Naive thymus-derived CD4-positive, alpha-beta T cell (primary cell): ENCODE measurements at regions of chr10 and their contacts with region 1.

Region 1: GRCh38 chr10:35351021-35351420 is 14.7 kb downstream of the CCNY start:
- DNase-seq: no peak
- ATAC-seq: no peak
- H3K4me3 ChIP-seq: no peak overlapping the region
- H3K4me3 Mint-ChIP-seq: peak overlapping the region in 6 of 10 donors; percentile 23 to 56 (median 38)
- H3K27ac ChIP-seq: no peak overlapping the region
- H3K27ac Mint-ChIP-seq: peak overlapping the region in 2 of 9 donors; percentile 5 to 52
- H3K4me1 ChIP-seq: peaks cover 18 to 24% of the 10 kb centered on the region in 2 donors
- H3K4me1 Mint-ChIP-seq: peaks cover 70 to 100% (median 94%) of the 10 kb centered on the region in 7 donors
- H3K27me3 ChIP-seq: no peaks in the 10 kb centered on the region
- H3K27me3 Mint-ChIP-seq: no peaks in the 10 kb centered on the region

Region 2: DNA sequence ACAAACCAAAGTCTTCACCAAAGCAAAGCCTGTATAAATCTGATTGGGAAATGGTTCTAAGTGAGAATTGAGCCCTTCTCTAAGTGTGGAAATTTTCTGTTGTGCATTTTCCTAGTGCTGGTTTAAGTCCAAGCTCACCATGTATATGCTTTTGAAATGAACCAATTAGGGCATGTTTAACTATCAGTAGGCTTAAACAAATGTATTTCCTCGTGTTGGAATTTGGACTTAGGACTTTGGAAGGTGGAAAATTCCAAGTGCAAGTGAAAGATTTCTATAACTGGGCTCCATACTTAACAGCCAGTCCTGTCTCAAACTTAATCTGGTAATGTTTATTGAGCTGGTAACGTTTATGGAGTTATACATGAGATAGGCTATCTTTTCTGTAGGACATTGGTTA is 13.8 kb after region 1 on chr10:
- CTCF ChIA-PET with region 1: interaction called, 4 read pairs
- POLR2A ChIA-PET with region 1: interaction called, 3 read pairs
- intact Hi-C with region 1: loop called in 1 of 2 experiments (anchors 2 kb)
- DNase-seq: no peak
- ATAC-seq: no peak
- H3K4me3 ChIP-seq: no peak overlapping the region
- H3K4me3 Mint-ChIP-seq: peak overlapping the region in 1 of 10 donors; percentile 15
- H3K27ac ChIP-seq: no peak overlapping the region
- H3K27ac Mint-ChIP-seq: peak overlapping the region in 1 of 9 donors; percentile 11
- H3K4me1 ChIP-seq: peaks cover 0 to 30% of the 10 kb centered on the region in 2 donors
- H3K4me1 Mint-ChIP-seq: peaks cover 23 to 81% (median 71%) of the 10 kb centered on the region in 7 donors
- H3K27me3 ChIP-seq: no peaks in the 10 kb centered on the region
- H3K27me3 Mint-ChIP-seq: no peaks in the 10 kb centered on the region

Region 3: GRCh38 chr10:35379226-35380137 is 28.5 kb after region 1 on chr10:
- CTCF ChIA-PET with region 1: no interaction called
- POLR2A ChIA-PET with region 1: no interaction called
- intact Hi-C with region 1: no loop called
- DNase-seq: peak in 7 of 9 donors; percentile 16 to 56 (median 34)
- ATAC-seq: peak; percentile 73
- H3K4me3 ChIP-seq: no peak overlapping the region
- H3K4me3 Mint-ChIP-seq: peak overlapping the region; percentile 18 to 74 (median 58)
- H3K27ac ChIP-seq: peak overlapping the region; percentile 12
- H3K27ac Mint-ChIP-seq: peak overlapping the region; percentile 41 to 90 (median 75)
- H3K4me1 ChIP-seq: peaks cover 9 to 26% of the 10 kb centered on the region in 2 donors
- H3K4me1 Mint-ChIP-seq: peaks cover 40 to 92% (median 77%) of the 10 kb centered on the region in 7 donors
- H3K27me3 ChIP-seq: no peaks in the 10 kb centered on the region
- H3K27me3 Mint-ChIP-seq: no peaks in the 10 kb centered on the region

Region 4: DNA sequence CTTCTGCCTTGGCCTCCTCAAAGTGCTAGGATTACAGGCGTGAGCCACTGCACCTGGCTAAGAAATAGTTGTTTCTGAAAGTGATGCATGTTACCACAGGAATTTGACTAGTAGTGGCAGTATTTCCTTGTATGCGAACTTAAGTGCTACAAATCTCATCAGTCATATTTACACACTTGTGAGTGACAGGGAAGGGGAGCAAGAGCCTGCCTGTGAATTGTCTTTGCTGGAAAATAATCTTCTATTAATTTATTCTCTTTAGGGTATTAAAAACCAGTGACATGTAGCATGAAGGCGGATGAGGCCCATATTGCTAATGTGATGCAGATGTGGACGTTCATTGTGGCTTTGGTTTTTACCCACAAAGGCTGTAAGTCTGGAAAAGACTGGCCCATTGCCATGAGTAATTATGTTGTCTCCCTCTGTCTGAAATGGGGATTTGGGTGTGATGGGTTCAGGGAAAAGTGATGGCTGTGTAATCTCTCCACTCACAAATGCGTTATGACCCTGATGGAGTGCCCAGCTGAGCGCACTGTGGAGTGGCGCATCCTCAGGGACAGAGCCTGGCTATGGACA is 82.9 kb after region 1 on chr10:
- CTCF ChIA-PET with region 1: no interaction called
- POLR2A ChIA-PET with region 1: no interaction called
- intact Hi-C with region 1: no loop called
- DNase-seq: no peak
- ATAC-seq: no peak
- H3K4me3 ChIP-seq: no peak overlapping the region
- H3K4me3 Mint-ChIP-seq: peak overlapping the region in 1 of 10 donors; percentile 10
- H3K27ac ChIP-seq: no peak overlapping the region
- H3K27ac Mint-ChIP-seq: peak overlapping the region in 5 of 9 donors; percentile 14 to 82 (median 58)
- H3K4me1 ChIP-seq: no peaks in the 10 kb centered on the region
- H3K4me1 Mint-ChIP-seq: peaks cover 18 to 51% (median 35%) of the 10 kb centered on the region in 7 donors
- H3K27me3 ChIP-seq: no peaks in the 10 kb centered on the region
- H3K27me3 Mint-ChIP-seq: no peaks in the 10 kb centered on the region

Region 5: GRCh38 chr10:35516102-35516670 is 165.2 kb after region 1 on chr10:
- CTCF ChIA-PET with region 1: no interaction called
- POLR2A ChIA-PET with region 1: no interaction called
- intact Hi-C with region 1: no loop called
- DNase-seq: no peak
- ATAC-seq: no peak
- H3K4me3 ChIP-seq: no peak overlapping the region
- H3K4me3 Mint-ChIP-seq: peak overlapping the region in 3 of 10 donors; percentile 9 to 34 (median 19)
- H3K27ac ChIP-seq: no peak overlapping the region
- H3K27ac Mint-ChIP-seq: peak overlapping the region in 1 of 9 donors; percentile 22
- H3K4me1 ChIP-seq: peaks cover 0 to 3% of the 10 kb centered on the region in 2 donors
- H3K4me1 Mint-ChIP-seq: peaks cover 9 to 64% (median 59%) of the 10 kb centered on the region in 7 donors
- H3K27me3 ChIP-seq: no peaks in the 10 kb centered on the region
- H3K27me3 Mint-ChIP-seq: no peaks in the 10 kb centered on the region